Activated B cell treated with CpG ODN at 0.5 μM for 24 hours (primary cell): ENCODE measurements at regions of chr4 and their contacts with region 1.

Region 1: DNA sequence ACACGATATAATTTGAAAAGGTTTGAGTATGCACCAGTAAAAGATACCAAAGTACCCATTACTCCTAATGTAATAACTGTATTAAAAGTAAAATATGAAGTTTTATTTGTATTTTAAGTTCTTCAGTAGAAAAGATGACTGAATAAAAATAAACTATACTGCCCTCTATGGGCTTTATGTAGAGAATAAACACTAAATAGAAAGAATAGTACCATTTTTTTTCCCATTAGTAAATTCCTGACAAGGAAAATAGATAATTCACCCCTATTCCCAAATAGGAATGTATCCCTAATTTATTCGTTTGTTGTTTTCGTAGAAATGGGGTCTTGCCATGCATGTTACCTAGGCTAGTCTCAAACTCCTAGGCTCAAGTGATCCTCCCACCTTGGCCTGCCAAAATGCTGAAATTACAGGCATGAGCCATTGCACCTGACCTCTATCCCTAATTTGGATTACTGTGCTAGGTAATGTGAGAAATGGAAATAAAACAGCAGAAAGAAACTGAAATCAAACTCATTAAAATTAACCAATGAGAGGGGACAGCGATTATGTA is 73.6 kb upstream of the COX18 start:
- DNase-seq: no peak
- ATAC-seq: no peak
- H3K4me3 Mint-ChIP-seq: no peak overlapping the region
- H3K27ac Mint-ChIP-seq: no peak overlapping the region
- H3K4me1 Mint-ChIP-seq: no peaks in the 10 kb centered on the region
- H3K27me3 Mint-ChIP-seq: no peaks in the 10 kb centered on the region
- CTCF ChIP-seq: no peak

Region 2: GRCh38 chr4:72701987-72702819 is 440.9 kb before region 1 on chr4:
- CTCF ChIA-PET with region 1: no interaction called
- POLR2A ChIA-PET with region 1: no interaction called
- intact Hi-C with region 1: loop called (anchors 5 kb)
- DNase-seq: no peak
- ATAC-seq: no peak
- H3K4me3 Mint-ChIP-seq: peak overlapping the region; percentile 75
- H3K27ac Mint-ChIP-seq: no peak overlapping the region
- H3K4me1 Mint-ChIP-seq: no peaks in the 10 kb centered on the region
- H3K27me3 Mint-ChIP-seq: peaks cover 6% of the 10 kb centered on the region
- CTCF ChIP-seq: no peak

Region 3: DNA sequence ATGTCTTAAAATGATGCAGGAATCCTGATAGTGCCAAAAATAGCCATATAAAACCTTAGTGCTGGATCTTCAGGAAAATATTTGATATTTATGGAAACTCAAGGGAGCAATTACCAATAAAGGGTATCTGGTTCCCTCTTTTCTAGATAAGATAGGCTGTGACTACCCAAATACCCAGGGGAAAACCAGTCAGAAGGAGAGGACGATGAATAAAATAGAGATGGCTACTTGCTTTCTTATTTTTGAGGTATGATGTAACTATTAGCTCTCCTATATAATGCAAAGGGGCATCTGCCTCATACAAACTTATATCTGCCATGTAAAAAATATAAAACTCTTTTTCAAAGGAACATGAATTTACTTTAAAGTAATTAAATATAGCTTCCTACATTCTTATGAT is 50.2 kb before region 1 on chr4:
- CTCF ChIA-PET with region 1: no interaction called
- POLR2A ChIA-PET with region 1: no interaction called
- intact Hi-C with region 1: no loop called
- DNase-seq: no peak
- ATAC-seq: no peak
- H3K4me3 Mint-ChIP-seq: no peak overlapping the region
- H3K27ac Mint-ChIP-seq: no peak overlapping the region
- H3K4me1 Mint-ChIP-seq: no peaks in the 10 kb centered on the region
- H3K27me3 Mint-ChIP-seq: no peaks in the 10 kb centered on the region
- CTCF ChIP-seq: no peak

Region 4: DNA sequence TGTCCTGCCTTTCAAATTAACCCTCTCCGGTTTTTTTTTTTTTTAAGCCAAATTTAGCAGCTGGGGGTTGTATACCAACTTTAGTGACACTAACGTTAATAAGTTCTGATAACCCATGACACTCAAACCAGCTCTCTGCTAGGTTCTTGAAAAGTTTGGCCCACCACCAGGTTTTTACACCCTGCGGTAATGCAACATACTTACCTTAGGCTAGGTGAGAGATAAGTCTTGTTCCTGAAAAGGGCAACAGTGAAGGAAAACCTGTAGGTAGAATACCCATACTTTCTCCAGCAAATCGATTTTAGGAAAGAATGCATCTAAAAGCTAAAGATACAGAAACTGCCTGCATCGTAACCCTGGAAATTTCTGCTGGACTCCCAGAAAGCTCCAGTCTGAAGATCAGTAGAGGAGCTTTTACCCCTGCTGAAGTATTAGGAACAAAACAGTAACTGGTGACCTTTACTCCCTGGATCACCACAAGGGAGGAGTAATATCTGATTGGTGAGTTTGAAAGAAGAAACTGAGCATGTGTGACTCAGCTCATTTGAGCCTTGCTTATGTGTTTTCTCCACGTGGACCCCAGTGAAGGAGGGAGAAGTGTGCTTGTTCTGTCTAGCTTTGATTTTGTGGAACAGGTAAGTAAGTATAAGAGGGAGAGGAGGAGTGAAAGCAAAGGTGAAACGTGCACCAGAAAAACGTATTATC is 39.1 kb before region 1 on chr4:
- CTCF ChIA-PET with region 1: no interaction called
- POLR2A ChIA-PET with region 1: no interaction called
- intact Hi-C with region 1: loop called (anchors 5 kb)
- DNase-seq: no peak
- ATAC-seq: no peak
- H3K4me3 Mint-ChIP-seq: no peak overlapping the region
- H3K27ac Mint-ChIP-seq: no peak overlapping the region
- H3K4me1 Mint-ChIP-seq: no peaks in the 10 kb centered on the region
- H3K27me3 Mint-ChIP-seq: no peaks in the 10 kb centered on the region
- CTCF ChIP-seq: no peak